Psoas muscle (tissue), 8 donors: ENCODE measurements at regions of chr15 and their contacts with region 1.

Region 1: DNA sequence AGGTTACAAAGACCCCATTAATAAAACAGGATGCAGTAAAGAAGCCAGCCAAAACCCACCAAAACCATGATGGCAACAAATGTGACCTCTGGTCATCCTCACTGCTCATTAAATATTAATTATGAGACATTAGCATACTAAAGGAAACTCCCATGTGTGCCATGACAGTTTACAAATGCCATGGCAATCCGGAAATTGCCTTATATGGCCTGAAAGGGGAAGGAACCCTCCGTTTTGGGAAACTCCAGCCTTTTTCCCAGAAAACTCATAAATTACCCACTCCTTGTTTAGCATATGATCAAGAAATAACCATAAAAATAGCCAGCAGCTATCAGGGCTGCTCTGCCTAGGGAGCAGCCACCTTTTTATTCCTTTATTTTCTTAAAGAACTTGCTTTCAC is 992.7 kb downstream of the NTRK3 start:
- DNase-seq: no peak
- ATAC-seq: no peak
- H3K4me3 ChIP-seq: no peak overlapping the region
- H3K27ac ChIP-seq: no peak overlapping the region
- H3K4me1 ChIP-seq: no peaks in the 10 kb centered on the region
- H3K27me3 ChIP-seq: no peaks in the 10 kb centered on the region
- CTCF ChIP-seq: no peak

Region 2: GRCh38 chr15:87294854-87295253 is 31.0 kb after region 1 on chr15:
- intact Hi-C with region 1: loop called in 1 of 2 experiments (anchors 5 kb)
- DNase-seq: no peak
- ATAC-seq: no peak
- H3K4me3 ChIP-seq: no peak overlapping the region
- H3K27ac ChIP-seq: no peak overlapping the region
- H3K4me1 ChIP-seq: no peaks in the 10 kb centered on the region
- H3K27me3 ChIP-seq: no peaks in the 10 kb centered on the region
- CTCF ChIP-seq: no peak